ENCODE measurements at regions of chr1 and their contacts with region 1.

Region 1: GRCh38 chr1:207885129-207886032 is 25.5 kb downstream of the CD34 start:
- DNase-seq: peak; percentile 68 to 88 (median 82)
- ATAC-seq: peak; percentile 95 to 98 (median 96)
- H3K4me3 ChIP-seq: no peak overlapping the region
- H3K27ac ChIP-seq: no peak overlapping the region
- H3K4me1 ChIP-seq: peaks cover 0 to 11% (median 6%) of the 10 kb centered on the region in 3 donors
- H3K27me3 ChIP-seq: no peaks in the 10 kb centered on the region
- CTCF ChIP-seq: peak; percentile 94

Region 2: DNA sequence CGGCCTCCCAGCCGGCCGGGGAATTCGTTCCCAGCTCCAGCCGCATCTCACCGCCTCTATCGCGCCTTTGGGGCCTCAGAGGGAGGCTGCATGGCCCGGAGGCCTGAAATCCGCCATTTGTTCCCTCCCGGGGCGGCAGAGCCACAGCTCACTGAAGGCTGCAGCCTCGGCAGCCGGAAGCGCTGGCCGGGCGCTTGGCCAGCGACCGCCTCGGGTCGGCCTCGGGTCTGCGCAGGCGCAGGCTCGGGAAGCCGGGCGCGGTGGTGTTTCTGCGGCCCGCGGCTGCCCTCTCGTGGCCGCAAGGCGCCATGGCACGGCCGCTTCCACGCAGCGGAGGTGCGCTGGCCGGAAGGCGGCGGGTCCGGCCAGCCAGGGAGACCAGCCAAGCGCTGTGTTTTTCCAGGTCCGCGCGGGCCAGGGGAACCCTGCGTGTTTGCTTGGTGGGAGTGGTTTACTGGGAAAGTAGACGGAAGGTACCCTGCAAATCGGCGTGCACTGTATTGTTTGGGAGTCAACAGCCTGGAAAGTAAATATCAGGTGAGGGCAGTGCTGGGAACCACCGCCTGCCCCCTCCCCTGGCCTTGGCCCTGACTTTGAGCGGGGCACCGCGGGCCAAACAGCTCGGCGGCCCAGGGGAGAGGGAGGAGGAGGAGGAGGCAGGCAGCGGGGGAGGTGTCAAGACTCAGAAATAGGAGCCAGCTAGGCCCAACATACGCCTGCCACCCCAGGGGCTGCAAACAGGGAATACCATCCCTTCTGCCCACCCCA is 78.2 kb after region 1 on chr1:
- intact Hi-C with region 1: loop called in 2 of 3 experiments (anchors 5 kb)
- DNase-seq: peak; percentile 95 to 99 (median 98)
- ATAC-seq: peak; percentile 87 to 92 (median 92)
- H3K4me3 ChIP-seq: peak overlapping the region; percentile 28 to 60 (median 46)
- H3K27ac ChIP-seq: peak overlapping the region; percentile 88 to 98 (median 94)
- H3K4me1 ChIP-seq: peaks cover 6 to 17% (median 14%) of the 10 kb centered on the region in 3 donors
- H3K27me3 ChIP-seq: no peaks in the 10 kb centered on the region
- CTCF ChIP-seq: peak; percentile 100